MCF 10A (cell line): ENCODE measurements at regions of chr5 and their contacts with region 1.

Region 1: DNA sequence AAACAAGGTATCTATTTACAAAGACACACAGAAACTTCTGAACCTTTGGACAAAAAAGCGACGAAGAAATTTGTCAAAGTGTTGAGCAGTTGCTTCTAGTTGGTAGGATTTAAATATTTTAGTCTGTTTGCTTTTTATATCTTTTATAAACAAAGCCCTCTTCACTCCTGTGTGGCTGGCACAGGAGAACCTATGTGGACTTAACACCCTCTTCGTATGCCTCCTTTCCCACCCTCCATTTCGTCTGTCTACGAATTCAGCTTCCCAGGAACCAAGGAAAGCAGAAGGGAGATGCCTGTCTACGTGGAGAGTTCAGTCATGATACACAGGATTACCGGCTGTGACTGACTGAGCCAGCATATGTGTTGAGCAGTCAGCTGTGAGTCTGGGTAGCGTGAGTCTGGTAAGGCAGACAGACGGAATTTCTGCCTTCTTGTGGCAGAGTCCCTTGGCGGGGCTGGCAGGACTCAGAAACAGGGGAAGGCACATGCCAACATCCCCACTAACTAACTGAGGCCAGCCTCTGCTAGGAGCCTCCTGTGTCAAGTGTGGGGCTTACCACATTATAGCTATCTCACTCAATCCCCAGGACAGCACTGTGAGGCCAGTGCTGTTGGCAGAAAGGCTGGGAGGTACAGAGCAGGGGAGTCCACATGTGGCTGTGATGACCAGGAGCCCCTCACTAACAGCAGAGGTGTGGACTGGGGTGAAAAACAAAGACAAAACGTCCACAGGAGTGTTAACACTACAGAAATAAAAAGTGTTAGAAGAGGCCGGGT is 13.9 kb upstream of the ZFP62 start:
- DNase-seq: no peak
- H3K4me3 Mint-ChIP-seq: no peak overlapping the region
- H3K27ac Mint-ChIP-seq: peak overlapping the region; percentile 28
- H3K4me1 Mint-ChIP-seq: peaks cover 17% of the 10 kb centered on the region
- H3K27me3 Mint-ChIP-seq: no peaks in the 10 kb centered on the region
- CTCF ChIP-seq: no peak

Region 2: DNA sequence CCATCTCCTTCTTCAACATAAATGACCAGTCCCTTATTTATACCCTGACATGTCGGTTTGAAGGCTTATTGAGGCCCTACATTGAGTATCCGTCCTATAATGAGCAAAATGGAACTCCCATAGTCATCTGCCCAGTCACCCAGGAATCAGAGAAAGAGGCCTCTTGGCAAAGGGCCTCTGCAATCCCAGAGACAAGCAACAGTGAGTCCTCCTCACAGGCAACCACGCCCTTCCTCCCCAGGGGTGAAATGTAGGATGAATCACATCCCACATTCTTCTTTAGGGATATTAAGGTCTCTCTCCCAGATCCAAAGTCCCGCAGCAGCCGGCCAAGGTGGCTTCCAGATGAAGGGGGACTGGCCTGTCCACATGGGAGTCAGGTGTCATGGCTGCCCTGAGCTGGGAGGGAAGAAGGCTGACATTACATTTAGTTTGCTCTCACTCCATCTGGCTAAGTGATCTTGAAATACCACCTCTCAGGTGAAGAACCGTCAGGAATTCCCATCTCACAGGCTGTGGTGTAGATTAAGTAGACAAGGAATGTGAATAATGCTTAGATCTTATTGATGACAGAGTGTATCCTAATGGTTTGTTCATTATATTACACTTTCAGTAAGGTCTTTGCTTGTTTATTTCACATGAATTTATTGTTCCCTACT is 75.4 kb after region 1 on chr5:
- CTCF ChIA-PET with region 1: no interaction called
- POLR2A ChIA-PET with region 1: interaction called, 4 read pairs
- intact Hi-C with region 1: loop called (anchors 5 kb)
- DNase-seq: peak; percentile 79
- H3K4me3 Mint-ChIP-seq: no peak overlapping the region
- H3K27ac Mint-ChIP-seq: peak overlapping the region; percentile 61
- H3K4me1 Mint-ChIP-seq: peaks cover 12% of the 10 kb centered on the region
- H3K27me3 Mint-ChIP-seq: no peaks in the 10 kb centered on the region
- CTCF ChIP-seq: no peak